Lower leg skin (tissue), 4 donors: ENCODE measurements at regions of chr14 and their contacts with region 1.

Region 1: GRCh38 chr14:96741151-96741977 is 55.8 kb upstream of the VRK1 start:
- DNase-seq: peak; percentile 23 to 89
- H3K4me3 ChIP-seq: no peak overlapping the region
- CTCF ChIP-seq: peak in 1 of 3 donors; percentile 34
- POLR2A ChIP-seq: no peak

Region 2: GRCh38 chr14:96584199-96584906 is 157.0 kb before region 1 on chr14:
- intact Hi-C with region 1: loop called (anchors 5 kb)
- DNase-seq: peak; percentile 11 to 80
- H3K4me3 ChIP-seq: no peak overlapping the region
- CTCF ChIP-seq: no peak
- POLR2A ChIP-seq: no peak